ENCODE measurements at regions of chr3 and their contacts with region 1.

Region 1: GRCh38 chr3:177359593-177360357 is 162.5 kb upstream of the TBL1XR1 start:
- DNase-seq: peak; percentile 94 to 99 (median 96)
- ATAC-seq: peak; percentile 84
- H3K4me3 ChIP-seq: peak overlapping the region; percentile 59 to 93
- H3K4me3 Mint-ChIP-seq: peak overlapping the region; percentile 92
- H3K27ac ChIP-seq: peak overlapping the region; percentile 89 to 99
- H3K27ac Mint-ChIP-seq: peak overlapping the region; percentile 99
- H3K4me1 ChIP-seq: peaks cover 33% of the 10 kb centered on the region
- H3K4me1 Mint-ChIP-seq: peaks cover 49% of the 10 kb centered on the region
- H3K27me3 ChIP-seq: no peaks in the 10 kb centered on the region
- H3K27me3 Mint-ChIP-seq: no peaks in the 10 kb centered on the region
- CTCF ChIP-seq: no peak

Region 2: DNA sequence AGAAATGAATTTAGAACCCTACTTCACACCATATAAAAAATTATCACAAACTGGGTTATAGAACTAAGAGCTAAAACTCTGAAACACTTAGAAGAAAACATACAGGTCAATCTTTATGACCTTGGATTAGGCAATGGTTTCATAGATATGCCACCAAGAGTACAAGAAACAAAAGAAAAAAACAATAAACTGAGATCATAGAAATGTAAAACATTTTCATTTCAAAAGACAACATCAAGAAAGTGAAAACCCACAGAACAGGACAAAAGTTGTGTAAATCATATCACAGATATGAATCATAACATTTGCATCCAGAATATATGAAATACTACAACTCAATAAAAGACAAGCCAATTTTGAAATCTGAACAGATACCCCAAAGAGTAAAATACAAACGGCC is 234.9 kb before region 1 on chr3:
- CTCF ChIA-PET with region 1: no interaction called
- POLR2A ChIA-PET with region 1: interaction called, 5 read pairs
- intact Hi-C with region 1: loop called in 1 of 2 experiments (anchors 5 kb)
- DNase-seq: no peak
- ATAC-seq: no peak
- H3K4me3 ChIP-seq: no peak overlapping the region
- H3K4me3 Mint-ChIP-seq: no peak overlapping the region
- H3K27ac ChIP-seq: no peak overlapping the region
- H3K27ac Mint-ChIP-seq: peak overlapping the region; percentile 13
- H3K4me1 ChIP-seq: peaks cover 13% of the 10 kb centered on the region
- H3K4me1 Mint-ChIP-seq: peaks cover 88% of the 10 kb centered on the region
- H3K27me3 ChIP-seq: no peaks in the 10 kb centered on the region
- H3K27me3 Mint-ChIP-seq: no peaks in the 10 kb centered on the region
- CTCF ChIP-seq: no peak

Region 3: GRCh38 chr3:177320765-177321247 is 39.0 kb before region 1 on chr3:
- CTCF ChIA-PET with region 1: no interaction called
- POLR2A ChIA-PET with region 1: interaction called, 4 read pairs
- intact Hi-C with region 1: loop called (anchors 2 to 5 kb)
- DNase-seq: peak in 1 of 9 experiments; percentile 16
- ATAC-seq: peak; percentile 31
- H3K4me3 ChIP-seq: no peak overlapping the region
- H3K4me3 Mint-ChIP-seq: no peak overlapping the region
- H3K27ac ChIP-seq: no peak overlapping the region
- H3K27ac Mint-ChIP-seq: peak overlapping the region; percentile 69
- H3K4me1 ChIP-seq: peaks cover 14% of the 10 kb centered on the region
- H3K4me1 Mint-ChIP-seq: peaks cover 32% of the 10 kb centered on the region
- H3K27me3 ChIP-seq: no peaks in the 10 kb centered on the region
- H3K27me3 Mint-ChIP-seq: no peaks in the 10 kb centered on the region
- CTCF ChIP-seq: no peak

Region 4: GRCh38 chr3:177448987-177449975 is 89.5 kb after region 1 on chr3:
- CTCF ChIA-PET with region 1: interaction called, 3 read pairs
- POLR2A ChIA-PET with region 1: interaction called, 20 read pairs
- intact Hi-C with region 1: no loop called
- DNase-seq: peak in 4 of 9 experiments; percentile 11 to 59 (median 50)
- ATAC-seq: peak; percentile 71
- H3K4me3 ChIP-seq: no peak overlapping the region
- H3K4me3 Mint-ChIP-seq: peak overlapping the region; percentile 50
- H3K27ac ChIP-seq: peak overlapping the region in 1 of 2 experiments; percentile 63
- H3K27ac Mint-ChIP-seq: peak overlapping the region; percentile 78
- H3K4me1 ChIP-seq: peaks cover 12% of the 10 kb centered on the region
- H3K4me1 Mint-ChIP-seq: peaks cover 24% of the 10 kb centered on the region
- H3K27me3 ChIP-seq: no peaks in the 10 kb centered on the region
- H3K27me3 Mint-ChIP-seq: no peaks in the 10 kb centered on the region
- CTCF ChIP-seq: no peak

Region 5: GRCh38 chr3:177597311-177598096 is 237.7 kb after region 1 on chr3:
- CTCF ChIA-PET with region 1: no interaction called
- POLR2A ChIA-PET with region 1: interaction called, 11 read pairs
- intact Hi-C with region 1: loop called in 1 of 2 experiments (anchors 2 kb)
- DNase-seq: peak in 7 of 9 experiments; percentile 13 to 77 (median 26)
- ATAC-seq: peak; percentile 87
- H3K4me3 ChIP-seq: peak overlapping the region; percentile 0 to 8
- H3K4me3 Mint-ChIP-seq: peak overlapping the region; percentile 76
- H3K27ac ChIP-seq: peak overlapping the region; percentile 44 to 82
- H3K27ac Mint-ChIP-seq: peak overlapping the region; percentile 95
- H3K4me1 ChIP-seq: peaks cover 52% of the 10 kb centered on the region
- H3K4me1 Mint-ChIP-seq: peaks cover 84% of the 10 kb centered on the region
- H3K27me3 ChIP-seq: no peaks in the 10 kb centered on the region
- H3K27me3 Mint-ChIP-seq: no peaks in the 10 kb centered on the region
- CTCF ChIP-seq: no peak

Region 6: GRCh38 chr3:177777699-177778098 is 417.9 kb after region 1 on chr3:
- CTCF ChIA-PET with region 1: no interaction called
- POLR2A ChIA-PET with region 1: interaction called, 5 read pairs
- intact Hi-C with region 1: loop called in 1 of 2 experiments (anchors 5 kb)
- DNase-seq: peak in 5 of 9 experiments; percentile 13 to 53 (median 37)
- ATAC-seq: peak; percentile 44
- H3K4me3 ChIP-seq: no peak overlapping the region
- H3K4me3 Mint-ChIP-seq: no peak overlapping the region
- H3K27ac ChIP-seq: no peak overlapping the region
- H3K27ac Mint-ChIP-seq: no peak overlapping the region
- H3K4me1 ChIP-seq: peaks cover 16% of the 10 kb centered on the region
- H3K4me1 Mint-ChIP-seq: peaks cover 19% of the 10 kb centered on the region
- H3K27me3 ChIP-seq: no peaks in the 10 kb centered on the region
- H3K27me3 Mint-ChIP-seq: no peaks in the 10 kb centered on the region
- CTCF ChIP-seq: no peak